ENCODE measurements at regions of chr18 and their contacts with region 1.

Region 1: GRCh38 chr18:3623769-3624545 is 174.0 kb downstream of the TGIF1 start:
- DNase-seq: peak; percentile 88

Region 2: DNA sequence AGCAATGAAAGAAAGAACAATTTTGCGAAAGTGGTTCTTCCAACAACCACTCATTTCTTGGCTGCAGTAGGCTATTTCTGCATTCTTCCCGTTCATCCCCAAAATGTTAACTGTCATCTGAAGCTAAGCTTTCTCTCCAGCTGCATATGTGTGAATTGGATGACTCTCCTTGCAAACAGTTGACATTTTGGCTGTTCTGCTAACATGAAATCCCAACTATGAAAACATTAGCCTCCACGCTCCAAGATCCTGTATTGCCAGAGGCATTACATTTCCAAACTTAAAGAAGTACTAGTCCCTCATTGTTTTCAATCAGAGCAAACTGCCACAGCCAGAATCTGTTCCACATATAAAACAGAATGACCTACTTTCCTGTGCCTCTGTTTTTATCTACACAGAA is 85.5 kb before region 1 on chr18:
- intact Hi-C with region 1: no loop called
- DNase-seq: no peak

Region 3: DNA sequence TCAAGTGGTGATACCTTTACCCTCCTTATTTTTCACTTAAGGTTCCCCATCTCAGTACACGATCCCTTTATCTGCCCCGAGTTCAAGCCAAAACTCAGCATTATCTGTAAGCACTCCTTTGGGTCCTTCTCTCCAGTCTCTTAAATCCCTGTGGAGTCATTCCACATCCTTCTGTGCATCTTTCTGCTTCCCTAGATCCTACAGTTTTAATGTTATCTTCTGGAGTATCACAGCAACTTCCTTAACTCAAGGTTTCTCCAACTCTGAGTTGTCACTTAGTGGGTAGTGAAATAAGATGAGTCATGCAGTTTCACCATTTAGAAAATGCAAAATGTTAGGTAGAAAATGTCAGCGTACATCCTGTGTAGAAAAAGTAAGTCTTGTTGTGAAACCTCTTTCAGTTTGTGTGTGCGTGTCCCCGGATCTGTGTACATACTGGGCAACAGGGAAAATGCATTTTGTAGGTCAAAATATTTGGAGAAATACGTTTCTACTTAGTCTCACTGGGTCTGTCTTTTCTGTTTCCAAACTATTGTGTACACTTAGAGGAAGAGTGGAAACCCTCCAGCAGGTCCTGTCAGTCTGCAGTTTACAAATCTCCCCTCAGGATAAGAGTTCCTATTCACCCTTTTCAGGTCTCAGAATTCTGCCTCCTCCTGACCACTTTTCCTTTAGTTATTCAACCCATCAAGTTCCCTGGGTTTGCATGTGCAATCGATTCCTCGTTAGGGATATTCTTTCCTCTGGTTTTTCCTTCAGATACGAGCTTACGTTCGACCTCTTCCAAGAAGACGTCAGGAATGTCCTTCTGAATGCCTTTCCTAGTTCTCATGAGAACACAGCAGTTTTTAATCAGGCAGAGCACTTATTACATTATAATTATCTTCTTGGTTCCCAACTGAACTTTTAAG is 19.2 kb before region 1 on chr18:
- intact Hi-C with region 1: loop called (anchors 2 kb)
- DNase-seq: peak; percentile 26

Region 4: GRCh38 chr18:3652380-3653262 is 28.7 kb after region 1 on chr18:
- intact Hi-C with region 1: loop called (anchors 1 kb)
- DNase-seq: peak; percentile 86

Measured in cardiac septum (tissue), 1 donor.